ENCODE measurements at regions of chr5 and their contacts with region 1.

Region 1: GRCh38 chr5:134784241-134784920 is 25.8 kb downstream of the DDX46 start:
- DNase-seq: no peak
- ATAC-seq: no peak
- H3K4me3 Mint-ChIP-seq: no peak overlapping the region
- H3K27ac Mint-ChIP-seq: no peak overlapping the region
- H3K4me1 Mint-ChIP-seq: no peaks in the 10 kb centered on the region
- H3K27me3 Mint-ChIP-seq: no peaks in the 10 kb centered on the region

Region 2: GRCh38 chr5:134803821-134804220 is 19.4 kb after region 1 on chr5:
- CTCF ChIA-PET with region 1: no interaction called
- POLR2A ChIA-PET with region 1: no interaction called
- intact Hi-C with region 1: no loop called
- DNase-seq: no peak
- ATAC-seq: no peak
- H3K4me3 Mint-ChIP-seq: no peak overlapping the region
- H3K27ac Mint-ChIP-seq: no peak overlapping the region
- H3K4me1 Mint-ChIP-seq: no peaks in the 10 kb centered on the region
- H3K27me3 Mint-ChIP-seq: no peaks in the 10 kb centered on the region

Region 3: DNA sequence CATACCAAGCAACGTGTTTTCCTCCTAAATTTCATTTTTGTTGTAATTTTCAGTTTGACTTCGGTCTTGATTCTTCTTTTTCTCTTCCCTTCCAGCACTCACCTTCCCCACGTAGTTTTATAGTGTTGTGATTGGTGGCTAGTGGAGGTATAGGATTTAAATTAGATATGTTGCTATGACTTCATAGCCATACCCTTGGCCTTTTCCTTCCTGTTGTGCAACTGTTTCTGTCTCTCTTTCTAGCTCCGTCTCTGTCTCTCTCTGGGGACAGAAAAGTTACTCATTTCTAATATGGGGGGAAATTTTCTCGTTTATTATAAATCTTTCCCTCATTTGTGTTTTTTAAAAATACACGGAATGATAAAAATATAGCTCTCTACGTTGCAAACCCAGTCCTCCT is 40.8 kb after region 1 on chr5:
- CTCF ChIA-PET with region 1: no interaction called
- POLR2A ChIA-PET with region 1: no interaction called
- intact Hi-C with region 1: loop called in 1 of 2 experiments (anchors 5 kb)
- DNase-seq: no peak
- ATAC-seq: no peak
- H3K4me3 Mint-ChIP-seq: no peak overlapping the region
- H3K27ac Mint-ChIP-seq: peak overlapping the region; percentile 18
- H3K4me1 Mint-ChIP-seq: no peaks in the 10 kb centered on the region
- H3K27me3 Mint-ChIP-seq: no peaks in the 10 kb centered on the region

Region 4: DNA sequence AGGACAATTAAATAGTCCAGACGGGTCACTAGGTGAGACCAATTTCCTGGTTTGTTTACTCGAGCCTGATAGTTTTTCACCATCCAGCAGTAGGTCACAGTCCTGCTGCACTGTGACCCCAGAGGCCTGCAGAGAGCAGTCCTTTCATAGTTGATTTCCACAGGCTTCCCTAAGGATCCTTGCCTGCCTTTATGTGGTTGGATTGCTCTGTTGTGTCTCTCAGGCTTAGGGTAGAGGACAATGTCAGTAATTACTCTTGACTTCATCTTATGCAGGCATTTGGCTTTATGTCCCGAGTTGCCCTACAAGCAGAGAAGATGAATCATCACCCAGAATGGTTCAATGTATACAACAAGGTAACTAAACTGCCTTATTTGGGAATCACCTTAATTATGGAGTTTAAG is 174.4 kb after region 1 on chr5:
- CTCF ChIA-PET with region 1: no interaction called
- POLR2A ChIA-PET with region 1: no interaction called
- intact Hi-C with region 1: no loop called
- DNase-seq: no peak
- ATAC-seq: no peak
- H3K4me3 Mint-ChIP-seq: no peak overlapping the region
- H3K27ac Mint-ChIP-seq: no peak overlapping the region
- H3K4me1 Mint-ChIP-seq: peaks cover 4% of the 10 kb centered on the region
- H3K27me3 Mint-ChIP-seq: no peaks in the 10 kb centered on the region

Measured in activated CD4-positive, alpha-beta T cell treated with anti-CD3 and anti-CD28 coated beads for 36 hours (primary cell).